ENCODE measurements at regions of chrX and their contacts with region 1.

Region 1: GRCh38 chrX:79270401-79270800 is 96.7 kb downstream of the ITM2A start:
- DNase-seq: peak; percentile 90
- ATAC-seq: peak; percentile 97
- H3K4me3 Mint-ChIP-seq: peak overlapping the region; percentile 32
- H3K27ac Mint-ChIP-seq: peak overlapping the region; percentile 64
- H3K4me1 Mint-ChIP-seq: peaks cover 43% of the 10 kb centered on the region
- H3K27me3 Mint-ChIP-seq: no peaks in the 10 kb centered on the region
- CTCF ChIP-seq: peak; percentile 62

Region 2: DNA sequence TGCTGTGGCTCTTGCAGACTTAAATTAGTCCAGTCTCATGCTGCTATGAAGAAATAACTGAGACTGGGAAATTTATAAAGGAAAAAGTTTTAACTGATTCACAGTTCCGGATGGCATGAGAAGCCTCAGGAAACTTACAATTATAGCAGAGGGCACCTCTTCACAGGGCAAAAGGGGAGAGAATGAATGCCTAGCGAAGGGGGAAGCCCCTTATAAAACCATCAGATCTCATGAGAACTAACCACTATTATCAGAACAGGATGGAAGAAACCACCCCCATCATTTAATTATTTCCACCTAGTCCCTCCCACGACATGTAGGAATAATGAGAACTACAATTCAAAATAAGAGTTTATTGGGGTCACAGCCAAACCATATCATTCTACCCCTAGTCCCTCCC is 34.5 kb before region 1 on chrX:
- CTCF ChIA-PET with region 1: no interaction called
- POLR2A ChIA-PET with region 1: no interaction called
- intact Hi-C with region 1: loop called (anchors 5 kb)
- DNase-seq: no peak
- ATAC-seq: peak; percentile 28
- H3K4me3 Mint-ChIP-seq: no peak overlapping the region
- H3K27ac Mint-ChIP-seq: peak overlapping the region; percentile 77
- H3K4me1 Mint-ChIP-seq: peaks cover 59% of the 10 kb centered on the region
- H3K27me3 Mint-ChIP-seq: no peaks in the 10 kb centered on the region
- CTCF ChIP-seq: no peak

Region 3: DNA sequence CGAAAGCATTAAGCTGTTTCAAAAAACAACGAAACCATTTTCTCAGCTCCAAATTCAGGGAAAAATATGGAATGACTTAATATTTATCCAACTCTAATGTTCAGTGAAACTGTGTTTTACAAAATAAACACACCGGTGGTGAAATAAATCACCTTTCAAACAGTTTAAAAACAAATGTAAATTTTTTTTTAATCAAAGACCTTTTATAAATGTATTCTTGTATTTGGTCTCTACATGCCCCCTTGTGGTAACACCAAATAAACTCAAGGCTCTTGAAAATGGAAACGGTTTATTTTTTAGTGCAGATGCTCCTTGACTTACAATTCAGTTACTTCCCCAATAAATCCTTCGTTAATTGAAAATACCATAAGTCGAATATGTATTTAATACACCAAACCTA is 142.6 kb after region 1 on chrX:
- CTCF ChIA-PET with region 1: interaction called, 3 read pairs
- POLR2A ChIA-PET with region 1: no interaction called
- intact Hi-C with region 1: loop called (anchors 10 kb)
- DNase-seq: no peak
- ATAC-seq: no peak
- H3K4me3 Mint-ChIP-seq: peak overlapping the region; percentile 48
- H3K27ac Mint-ChIP-seq: no peak overlapping the region
- H3K4me1 Mint-ChIP-seq: peaks cover 8% of the 10 kb centered on the region
- H3K27me3 Mint-ChIP-seq: no peaks in the 10 kb centered on the region
- CTCF ChIP-seq: peak; percentile 56

Measured in activated CD8-positive, alpha-beta T cell treated with anti-CD3 and anti-CD28 coated beads for 36 hours (primary cell).